H1 (cell line): ENCODE measurements at regions of chr16 and their contacts with region 1.

Region 1: GRCh38 chr16:87636072-87636684 is 33.9 kb downstream of the JPH3 start:
- DNase-seq: peak; percentile 43 to 88
- H3K4me3 ChIP-seq: no peak overlapping the region
- H3K27ac ChIP-seq: no peak overlapping the region
- H3K4me1 ChIP-seq: peaks cover 0 to 4% (median 2%) of the 10 kb centered on the region in 4 experiments; a peak in 4 of 7 replicates
- H3K27me3 ChIP-seq: no peaks in the 10 kb centered on the region; a peak in 2 of 7 replicates
- CTCF ChIP-seq: peak; percentile 84 to 91 (median 87)
- EP300 ChIP-seq: no peak
- POLR2A ChIP-seq: no peak
- RAD21 ChIP-seq: peak; percentile 89 to 91

Region 2: GRCh38 chr16:87426423-87427215 is 209.6 kb before region 1 on chr16:
- CTCF ChIA-PET with region 1: interaction called, 18 read pairs
- POLR2A ChIA-PET with region 1: no interaction called
- DNase-seq: no peak
- H3K4me3 ChIP-seq: peak overlapping the region in 1 of 4 experiments; percentile 3; a peak in 1 of 8 replicates
- H3K27ac ChIP-seq: 0 out of 2 replicates have a peak overlapping the region, but pooled peaks have one; percentile 39
- H3K4me1 ChIP-seq: peaks cover 5 to 17% (median 11%) of the 10 kb centered on the region in 4 experiments
- H3K27me3 ChIP-seq: no peaks in the 10 kb centered on the region
- CTCF ChIP-seq: no peak
- EP300 ChIP-seq: no peak
- POLR2A ChIP-seq: no peak
- RAD21 ChIP-seq: no peak

Region 3: GRCh38 chr16:87550496-87550961 is 85.6 kb before region 1 on chr16:
- CTCF ChIA-PET with region 1: interaction called, 18 read pairs
- POLR2A ChIA-PET with region 1: no interaction called
- DNase-seq: peak in 1 of 2 experiments; percentile 95
- H3K4me3 ChIP-seq: no peak overlapping the region
- H3K27ac ChIP-seq: no peak overlapping the region
- H3K4me1 ChIP-seq: no peaks in the 10 kb centered on the region; a peak in 2 of 7 replicates
- H3K27me3 ChIP-seq: no peaks in the 10 kb centered on the region; a peak in 1 of 7 replicates
- CTCF ChIP-seq: peak; percentile 81 to 90 (median 89)
- EP300 ChIP-seq: no peak
- POLR2A ChIP-seq: no peak
- RAD21 ChIP-seq: peak; percentile 65 to 75

Region 4: GRCh38 chr16:87602001-87602790 is 34.0 kb before region 1 on chr16 and contains the start of gene JPH3:
- CTCF ChIA-PET with region 1: interaction called, 39 read pairs
- POLR2A ChIA-PET with region 1: interaction called, 3 read pairs
- DNase-seq: peak; percentile 70 to 87
- H3K4me3 ChIP-seq: peak within 1 kb of the TSS; percentile 56 to 98 (median 96)
- H3K27ac ChIP-seq: no peak within 1 kb of the TSS
- H3K4me1 ChIP-seq: peaks cover 0 to 9% (median 6%) of the 10 kb centered on the region in 4 experiments; a peak in 5 of 7 replicates
- H3K27me3 ChIP-seq: peaks cover 0 to 9% (median 3%) of the 10 kb centered on the region in 4 experiments; a peak in 5 of 7 replicates
- CTCF ChIP-seq: no peak
- EP300 ChIP-seq: no peak
- POLR2A ChIP-seq: no peak
- RAD21 ChIP-seq: no peak
- total RNA-seq, gene JPH3: 28.3 and 28.4 TPM in 2 replicates

Region 5: GRCh38 chr16:87620201-87620495 is 16.0 kb before region 1 on chr16:
- CTCF ChIA-PET with region 1: interaction called, 65 read pairs
- POLR2A ChIA-PET with region 1: no interaction called
- DNase-seq: no peak
- H3K4me3 ChIP-seq: no peak overlapping the region
- H3K27ac ChIP-seq: no peak overlapping the region
- H3K4me1 ChIP-seq: peaks cover 0 to 20% (median 3%) of the 10 kb centered on the region in 4 experiments; a peak in 6 of 7 replicates
- H3K27me3 ChIP-seq: no peaks in the 10 kb centered on the region
- CTCF ChIP-seq: peak; percentile 3 to 37 (median 33); a peak in 2 of 4 replicates
- EP300 ChIP-seq: no peak
- POLR2A ChIP-seq: no peak
- RAD21 ChIP-seq: no peak

Region 6: GRCh38 chr16:87744750-87745514 is 108.8 kb after region 1 on chr16:
- CTCF ChIA-PET with region 1: no interaction called
- POLR2A ChIA-PET with region 1: no interaction called
- DNase-seq: no peak
- H3K4me3 ChIP-seq: no peak overlapping the region
- H3K27ac ChIP-seq: no peak overlapping the region
- H3K4me1 ChIP-seq: no peaks in the 10 kb centered on the region
- H3K27me3 ChIP-seq: no peaks in the 10 kb centered on the region
- CTCF ChIP-seq: no peak
- EP300 ChIP-seq: no peak
- POLR2A ChIP-seq: no peak
- RAD21 ChIP-seq: no peak

Region 7: GRCh38 chr16:88022076-88023062 is 386.2 kb after region 1 on chr16:
- CTCF ChIA-PET with region 1: no interaction called
- POLR2A ChIA-PET with region 1: no interaction called
- DNase-seq: no peak
- H3K4me3 ChIP-seq: no peak overlapping the region
- H3K27ac ChIP-seq: no peak overlapping the region
- H3K4me1 ChIP-seq: peaks cover 0 to 6% (median 2%) of the 10 kb centered on the region in 4 experiments; a peak in 3 of 7 replicates
- H3K27me3 ChIP-seq: no peaks in the 10 kb centered on the region
- CTCF ChIP-seq: no peak
- EP300 ChIP-seq: no peak
- POLR2A ChIP-seq: no peak
- RAD21 ChIP-seq: peak in 1 of 2 experiments; percentile 19; a peak in 1 of 4 replicates